ENCODE measurements at regions of chr16 and their contacts with region 1.

Region 1: GRCh38 chr16:8674413-8675022 is at the start of gene ABAT:
- DNase-seq: peak; percentile 83
- H3K4me3 Mint-ChIP-seq: peak within 1 kb of the TSS; percentile 77
- H3K27ac Mint-ChIP-seq: no peak within 1 kb of the TSS
- H3K4me1 Mint-ChIP-seq: peaks cover 26% of the 10 kb centered on the region
- H3K27me3 Mint-ChIP-seq: no peaks in the 10 kb centered on the region
- CTCF ChIP-seq: no peak
- total RNA-seq, gene ABAT: 2.4 and 3.0 TPM in 2 replicates

Region 2: GRCh38 chr16:8402981-8403843 is 271.3 kb before region 1 on chr16:
- CTCF ChIA-PET with region 1: no interaction called
- POLR2A ChIA-PET with region 1: no interaction called
- intact Hi-C with region 1: no loop called
- DNase-seq: no peak
- H3K4me3 Mint-ChIP-seq: no peak overlapping the region
- H3K27ac Mint-ChIP-seq: no peak overlapping the region
- H3K4me1 Mint-ChIP-seq: no peaks in the 10 kb centered on the region
- H3K27me3 Mint-ChIP-seq: no peaks in the 10 kb centered on the region
- CTCF ChIP-seq: no peak

Region 3: GRCh38 chr16:8655184-8655717 is 19.3 kb before region 1 on chr16:
- CTCF ChIA-PET with region 1: interaction called, 17 read pairs
- POLR2A ChIA-PET with region 1: interaction called, 3 read pairs
- intact Hi-C with region 1: no loop called
- DNase-seq: peak; percentile 66
- H3K4me3 Mint-ChIP-seq: no peak overlapping the region
- H3K27ac Mint-ChIP-seq: no peak overlapping the region
- H3K4me1 Mint-ChIP-seq: no peaks in the 10 kb centered on the region
- H3K27me3 Mint-ChIP-seq: no peaks in the 10 kb centered on the region
- CTCF ChIP-seq: peak; percentile 36

Region 4: DNA sequence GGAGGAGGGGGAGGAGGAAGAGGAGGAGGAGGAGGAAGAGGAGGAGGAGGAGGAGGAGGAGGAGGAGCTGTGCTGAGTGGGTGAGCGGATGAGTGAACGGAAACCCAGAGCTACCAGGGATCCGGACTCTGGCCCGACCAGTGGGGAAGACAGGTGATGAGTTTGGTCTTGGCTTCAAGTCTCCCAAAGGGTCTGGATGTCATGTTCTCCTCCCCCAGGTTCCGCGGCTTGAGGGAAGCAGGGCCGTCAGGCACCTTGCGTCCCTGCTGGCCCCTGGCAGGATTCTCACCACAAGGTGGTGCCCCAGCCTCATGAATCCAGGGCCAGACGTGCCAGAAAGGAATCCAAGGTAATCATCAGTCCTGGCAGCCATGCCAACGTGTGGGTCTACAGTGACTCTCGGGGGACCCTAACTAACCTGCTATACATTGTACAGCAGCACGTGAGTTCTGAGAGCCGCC is 13.6 kb before region 1 on chr16:
- CTCF ChIA-PET with region 1: interaction called, 17 read pairs
- POLR2A ChIA-PET with region 1: no interaction called
- intact Hi-C with region 1: no loop called
- DNase-seq: peak; percentile 75
- H3K4me3 Mint-ChIP-seq: no peak overlapping the region
- H3K27ac Mint-ChIP-seq: no peak overlapping the region
- H3K4me1 Mint-ChIP-seq: no peaks in the 10 kb centered on the region
- H3K27me3 Mint-ChIP-seq: no peaks in the 10 kb centered on the region
- CTCF ChIP-seq: peak; percentile 82

Region 5: GRCh38 chr16:8788578-8789172 is 114.2 kb after region 1 on chr16:
- CTCF ChIA-PET with region 1: interaction called, 303 read pairs
- POLR2A ChIA-PET with region 1: no interaction called
- intact Hi-C with region 1: loop called (anchors 1 kb)
- DNase-seq: no peak
- H3K4me3 Mint-ChIP-seq: no peak overlapping the region
- H3K27ac Mint-ChIP-seq: no peak overlapping the region
- H3K4me1 Mint-ChIP-seq: no peaks in the 10 kb centered on the region
- H3K27me3 Mint-ChIP-seq: no peaks in the 10 kb centered on the region
- CTCF ChIP-seq: no peak

Region 6: GRCh38 chr16:8797364-8798173 is 123.1 kb after region 1 on chr16 and contains the starts of genes PMM2 and TMEM186:
- CTCF ChIA-PET with region 1: interaction called, 303 read pairs
- POLR2A ChIA-PET with region 1: interaction called, 7 read pairs
- intact Hi-C with region 1: loop called (anchors 1 kb)
- DNase-seq: peak; percentile 96
- H3K4me3 Mint-ChIP-seq: peak within 1 kb of the TSS; percentile 92
- H3K27ac Mint-ChIP-seq: peak within 1 kb of the TSS; percentile 97
- H3K4me1 Mint-ChIP-seq: peaks cover 9% of the 10 kb centered on the region
- H3K27me3 Mint-ChIP-seq: no peaks in the 10 kb centered on the region
- CTCF ChIP-seq: no peak
- total RNA-seq, gene PMM2: 59.4 and 60.6 TPM in 2 replicates
- total RNA-seq, gene TMEM186: 12.9 and 13.9 TPM in 2 replicates

Measured in MCF 10A (cell line).